ENCODE measurements at regions of chr16 and their contacts with region 1.

Region 1: GRCh38 chr16:25111403-25112166 is at the start of gene LCMT1:
- DNase-seq: peak; percentile 97
- H3K4me3 Mint-ChIP-seq: peak within 1 kb of the TSS; percentile 94
- H3K27ac Mint-ChIP-seq: peak within 1 kb of the TSS; percentile 96
- H3K4me1 Mint-ChIP-seq: peaks cover 47% of the 10 kb centered on the region
- H3K27me3 Mint-ChIP-seq: no peaks in the 10 kb centered on the region
- total RNA-seq, gene LCMT1: 34.7 to 35.3 TPM

Region 2: DNA sequence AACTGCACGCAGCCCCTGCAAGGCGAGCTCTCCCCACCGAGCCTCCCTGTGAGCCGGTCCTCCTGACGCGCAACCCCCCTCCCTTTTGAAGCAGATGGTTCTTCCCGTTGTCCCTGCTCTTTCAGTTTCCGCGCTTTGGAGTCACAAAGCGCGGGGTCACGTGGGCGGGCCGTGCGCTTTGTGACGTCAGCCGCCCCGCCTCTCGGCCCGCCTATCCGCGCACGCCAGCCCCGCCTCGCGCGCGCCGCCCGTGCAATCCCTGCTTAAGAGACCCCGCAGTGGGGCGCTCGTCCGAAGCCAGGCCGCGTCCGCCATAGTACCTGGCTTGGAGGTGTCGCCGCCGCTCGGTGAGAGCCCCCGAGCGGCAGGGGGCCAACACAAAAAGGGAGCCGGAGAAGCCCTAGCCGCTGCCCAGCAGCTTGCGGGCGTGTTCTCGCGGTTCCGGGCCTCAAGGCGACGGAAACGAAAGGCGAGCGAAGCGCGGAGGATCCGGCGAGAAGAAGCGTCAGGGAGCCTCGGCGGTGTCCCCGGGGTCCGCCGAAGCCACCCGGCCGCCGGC is 572.2 kb before region 1 on chr16 and contains the start of gene RBBP6:
- CTCF ChIA-PET with region 1: no interaction called
- intact Hi-C with region 1: loop called (anchors 2 kb)
- DNase-seq: peak; percentile 92
- H3K4me3 Mint-ChIP-seq: peak within 1 kb of the TSS; percentile 99
- H3K27ac Mint-ChIP-seq: peak within 1 kb of the TSS; percentile 100
- H3K4me1 Mint-ChIP-seq: peaks cover 27% of the 10 kb centered on the region
- H3K27me3 Mint-ChIP-seq: no peaks in the 10 kb centered on the region
- total RNA-seq, gene RBBP6: 64.4 to 65.0 TPM

Region 3: DNA sequence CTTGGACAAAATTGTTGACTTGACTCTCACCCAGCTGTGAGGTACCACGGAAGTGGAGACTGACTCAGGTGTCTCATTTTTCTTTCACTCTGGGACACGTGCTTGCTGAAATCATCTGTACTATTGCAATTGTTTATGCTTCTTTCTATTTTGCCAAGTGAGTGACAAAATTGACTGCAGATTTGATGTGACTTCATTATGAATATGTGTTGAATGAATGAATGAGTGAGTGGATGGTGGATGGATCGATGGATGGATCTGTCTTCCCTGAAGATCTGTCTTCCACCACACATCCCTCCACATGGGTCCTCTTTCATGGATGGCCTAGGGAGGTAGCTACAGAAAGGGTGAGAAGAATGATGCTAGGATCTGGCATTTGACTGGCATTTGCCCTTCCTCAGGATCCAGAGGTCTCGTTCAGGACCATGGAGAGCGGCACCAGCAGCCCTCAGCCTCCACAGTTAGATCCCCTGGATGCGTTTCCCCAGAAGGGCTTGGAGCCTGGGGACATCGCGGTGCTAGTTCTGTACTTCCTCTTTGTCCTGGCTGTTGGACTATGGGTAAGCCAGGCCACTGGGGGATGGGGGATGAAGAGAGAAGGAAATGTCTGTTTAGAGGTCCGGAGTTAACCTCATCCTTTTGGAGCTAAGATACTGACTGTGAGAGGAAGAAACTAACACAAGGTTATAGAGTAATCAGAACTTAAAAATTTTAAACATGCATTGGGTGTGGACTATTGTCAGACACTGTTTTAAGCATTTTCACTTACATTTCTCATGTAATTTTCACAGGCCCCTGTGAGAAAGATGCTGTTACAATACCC is 253.2 kb before region 1 on chr16:
- CTCF ChIA-PET with region 1: no interaction called
- intact Hi-C with region 1: loop called (anchors 5 kb)
- DNase-seq: peak; percentile 77
- H3K4me3 Mint-ChIP-seq: no peak overlapping the region
- H3K27ac Mint-ChIP-seq: no peak overlapping the region
- H3K4me1 Mint-ChIP-seq: no peaks in the 10 kb centered on the region
- H3K27me3 Mint-ChIP-seq: peaks cover 4% of the 10 kb centered on the region

Region 4: GRCh38 chr16:25014500-25015147 is 97.0 kb before region 1 on chr16:
- CTCF ChIA-PET with region 1: no interaction called
- intact Hi-C with region 1: loop called (anchors 1 kb)
- DNase-seq: peak; percentile 47
- H3K4me3 Mint-ChIP-seq: peak overlapping the region; percentile 89
- H3K27ac Mint-ChIP-seq: peak overlapping the region; percentile 88
- H3K4me1 Mint-ChIP-seq: peaks cover 79% of the 10 kb centered on the region
- H3K27me3 Mint-ChIP-seq: no peaks in the 10 kb centered on the region

Region 5: DNA sequence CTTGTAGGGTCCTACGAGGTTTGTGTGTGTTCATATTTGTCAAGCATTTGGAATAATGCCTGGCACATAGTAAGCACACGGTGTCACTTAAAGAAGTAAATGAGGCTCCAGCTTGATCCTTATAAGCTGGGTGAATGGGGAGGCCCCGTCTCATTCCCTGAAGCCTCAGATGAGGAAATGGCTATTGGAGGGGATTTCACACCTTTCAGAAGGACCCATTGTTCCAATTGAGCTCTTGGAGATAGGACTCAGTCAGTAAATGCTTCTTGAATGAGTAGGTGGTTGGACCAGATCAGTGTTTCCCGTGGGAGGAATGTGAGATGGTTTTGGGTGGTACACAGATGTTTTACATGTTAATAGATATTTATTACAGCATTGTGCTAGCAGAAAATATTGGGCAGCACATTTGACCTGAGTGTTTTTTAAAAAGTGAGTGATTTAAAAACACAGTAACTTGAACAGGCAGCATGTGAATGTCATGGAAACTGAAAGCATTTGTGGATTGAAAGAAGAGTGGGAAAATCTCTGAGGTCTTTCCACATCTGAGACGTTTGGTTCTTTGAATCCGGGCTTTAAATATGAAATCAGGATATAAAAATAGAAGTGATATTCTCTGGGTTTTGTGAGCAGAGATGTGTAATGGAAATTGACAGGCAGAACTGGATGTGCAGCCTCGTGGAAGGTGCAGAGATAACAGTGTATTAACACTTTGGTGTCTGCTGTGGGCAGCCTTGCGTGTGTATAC is 60.0 kb before region 1 on chr16:
- CTCF ChIA-PET with region 1: interaction called, 16 read pairs
- intact Hi-C with region 1: loop called (anchors 1 kb)
- DNase-seq: peak; percentile 39
- H3K4me3 Mint-ChIP-seq: peak overlapping the region; percentile 53
- H3K27ac Mint-ChIP-seq: peak overlapping the region; percentile 74
- H3K4me1 Mint-ChIP-seq: peaks cover 66% of the 10 kb centered on the region
- H3K27me3 Mint-ChIP-seq: no peaks in the 10 kb centered on the region

Region 6: GRCh38 chr16:25093208-25094061 is 18.1 kb before region 1 on chr16:
- CTCF ChIA-PET with region 1: interaction called, 3 read pairs
- intact Hi-C with region 1: loop called (anchors 1 kb)
- DNase-seq: peak; percentile 49
- H3K4me3 Mint-ChIP-seq: peak overlapping the region; percentile 53
- H3K27ac Mint-ChIP-seq: peak overlapping the region; percentile 78
- H3K4me1 Mint-ChIP-seq: peaks cover 37% of the 10 kb centered on the region
- H3K27me3 Mint-ChIP-seq: no peaks in the 10 kb centered on the region

Region 7: DNA sequence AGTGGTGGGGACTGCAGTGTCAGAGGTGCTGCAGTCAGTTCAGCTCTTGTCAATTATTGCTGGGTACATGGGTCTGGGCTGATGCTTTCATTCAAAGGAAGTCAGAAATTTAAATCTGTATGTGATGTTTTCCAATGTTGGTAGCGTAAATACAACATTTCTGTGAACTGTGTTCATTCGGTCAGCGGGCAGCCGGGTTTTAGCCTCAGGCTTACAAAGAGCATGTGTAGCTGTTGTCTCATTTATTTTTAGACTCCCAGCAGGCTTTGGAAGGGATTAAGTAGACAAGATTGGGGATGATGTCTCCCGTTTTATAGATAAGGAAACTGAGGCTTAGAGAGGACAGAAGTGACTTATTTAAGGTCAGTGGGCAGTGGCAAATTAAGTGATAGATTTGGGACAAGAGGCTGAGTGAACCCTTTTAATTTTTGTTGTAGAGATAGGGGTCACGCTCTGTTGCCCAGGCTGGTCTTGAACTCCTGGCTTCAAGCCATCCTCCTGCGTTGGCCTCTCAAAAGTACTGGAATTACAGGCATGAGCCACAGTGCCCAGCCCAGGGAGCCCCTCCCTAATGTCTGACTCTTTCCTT is 113.2 kb after region 1 on chr16:
- CTCF ChIA-PET with region 1: interaction called, 25 read pairs
- intact Hi-C with region 1: no loop called
- DNase-seq: no peak
- H3K4me3 Mint-ChIP-seq: no peak overlapping the region
- H3K27ac Mint-ChIP-seq: no peak overlapping the region
- H3K4me1 Mint-ChIP-seq: no peaks in the 10 kb centered on the region
- H3K27me3 Mint-ChIP-seq: no peaks in the 10 kb centered on the region

Region 8: DNA sequence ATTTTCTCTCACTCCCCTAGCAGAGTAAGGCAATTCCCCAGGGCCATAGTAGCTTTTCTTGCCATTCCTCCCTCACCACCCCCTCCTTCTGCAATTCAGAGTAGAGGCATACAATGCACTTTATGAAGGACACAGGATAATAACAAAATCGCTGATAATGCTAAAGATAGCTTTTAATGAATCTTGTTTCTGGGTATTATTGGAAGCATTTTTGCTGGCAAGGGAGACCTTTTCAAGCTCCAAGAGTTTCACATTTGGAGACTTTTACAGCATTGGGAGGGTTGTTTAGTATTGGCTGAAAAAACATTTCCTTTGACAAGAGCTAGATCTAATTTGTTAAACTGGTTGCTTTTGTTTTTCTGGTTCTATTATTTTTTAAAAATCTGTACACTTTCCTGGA is 1382.2 kb after region 1 on chr16:
- CTCF ChIA-PET with region 1: no interaction called
- intact Hi-C with region 1: no loop called
- DNase-seq: no peak
- H3K4me3 Mint-ChIP-seq: no peak overlapping the region
- H3K27ac Mint-ChIP-seq: no peak overlapping the region
- H3K4me1 Mint-ChIP-seq: no peaks in the 10 kb centered on the region
- H3K27me3 Mint-ChIP-seq: peaks cover 14% of the 10 kb centered on the region

Measured in activated naive CD4-positive, alpha-beta T cell treated with anti-CD3 and anti-CD28 coated beads for 36 hours (primary cell).